WTC11 (cell line): ENCODE measurements at regions of chr17 and their contacts with region 1.

Region 1: GRCh38 chr17:39244600-39245570 is 19.1 kb upstream of the STAC2 start:
- DNase-seq: peak; percentile 98
- ATAC-seq: peak; percentile 92
- H3K4me3 Mint-ChIP-seq: no peak overlapping the region
- H3K27ac Mint-ChIP-seq: no peak overlapping the region
- H3K4me1 Mint-ChIP-seq: peaks cover 22% of the 10 kb centered on the region
- H3K27me3 Mint-ChIP-seq: no peaks in the 10 kb centered on the region; the same call in 1 of the 2 replicates
- CTCF ChIP-seq: peak; percentile 94

Region 2: DNA sequence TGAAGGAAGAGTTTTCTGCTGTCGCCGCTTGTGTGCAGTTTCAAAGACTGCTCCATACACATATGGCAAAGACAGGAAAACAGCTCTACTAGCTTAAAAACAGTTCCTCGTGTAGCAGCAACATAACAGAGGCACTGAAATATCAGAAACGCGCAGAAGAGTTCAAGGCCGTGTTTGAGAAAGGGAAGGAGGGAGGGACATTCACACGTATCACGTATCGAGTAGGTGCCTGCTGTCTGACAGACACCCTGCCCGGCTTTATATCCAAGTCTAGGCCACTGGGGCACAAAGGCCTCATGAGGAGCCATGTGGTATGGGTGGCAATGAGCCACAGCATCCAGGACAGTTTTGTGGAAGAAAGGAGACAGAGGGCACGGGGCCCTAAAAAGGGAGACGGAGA is 143.8 kb before region 1 on chr17:
- CTCF ChIA-PET with region 1: no interaction called
- POLR2A ChIA-PET with region 1: no interaction called
- DNase-seq: no peak
- ATAC-seq: no peak
- H3K4me3 Mint-ChIP-seq: no peak overlapping the region
- H3K27ac Mint-ChIP-seq: no peak overlapping the region
- H3K4me1 Mint-ChIP-seq: peaks cover 9% of the 10 kb centered on the region
- H3K27me3 Mint-ChIP-seq: no peaks in the 10 kb centered on the region; the same call in none of the 2 replicates
- CTCF ChIP-seq: no peak

Region 3: DNA sequence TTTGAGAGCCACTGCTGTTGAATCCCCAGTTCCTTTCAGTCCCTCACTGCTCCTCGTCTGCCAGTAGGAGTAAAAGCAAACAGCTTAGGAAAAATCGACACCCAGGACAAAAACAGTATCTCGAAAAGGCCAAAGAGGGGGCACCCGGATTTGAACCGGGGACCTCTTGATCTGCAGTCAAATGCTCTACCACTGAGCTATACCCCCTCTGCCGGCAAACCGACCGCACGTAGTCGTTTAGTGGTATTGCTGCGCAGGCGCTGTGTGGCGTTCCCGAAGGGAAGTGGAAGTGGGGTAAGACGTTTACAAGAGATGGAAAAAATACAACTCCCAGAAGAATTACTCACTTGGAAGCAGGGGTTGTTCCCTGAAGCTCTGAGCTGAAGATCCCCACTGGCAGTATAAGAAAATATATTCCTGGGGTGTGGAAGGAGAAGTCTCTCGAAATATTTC is 91.3 kb before region 1 on chr17:
- CTCF ChIA-PET with region 1: interaction called, 17 read pairs
- POLR2A ChIA-PET with region 1: no interaction called
- DNase-seq: peak; percentile 92
- ATAC-seq: peak; percentile 22
- H3K4me3 Mint-ChIP-seq: peak overlapping the region; percentile 100
- H3K27ac Mint-ChIP-seq: peak overlapping the region; percentile 13
- H3K4me1 Mint-ChIP-seq: peaks cover 21% of the 10 kb centered on the region
- H3K27me3 Mint-ChIP-seq: peaks cover 43% of the 10 kb centered on the region
- CTCF ChIP-seq: no peak

Region 4: GRCh38 chr17:39199820-39200069 is 45.1 kb before region 1 on chr17:
- CTCF ChIA-PET with region 1: interaction called, 626 read pairs
- POLR2A ChIA-PET with region 1: interaction called, 5 read pairs
- DNase-seq: peak; percentile 83
- ATAC-seq: peak; percentile 25
- H3K4me3 Mint-ChIP-seq: peak overlapping the region; percentile 98
- H3K27ac Mint-ChIP-seq: peak overlapping the region; percentile 100
- H3K4me1 Mint-ChIP-seq: peaks cover 48% of the 10 kb centered on the region
- H3K27me3 Mint-ChIP-seq: no peaks in the 10 kb centered on the region; the same call in 1 of the 2 replicates
- CTCF ChIP-seq: no peak

Region 5: DNA sequence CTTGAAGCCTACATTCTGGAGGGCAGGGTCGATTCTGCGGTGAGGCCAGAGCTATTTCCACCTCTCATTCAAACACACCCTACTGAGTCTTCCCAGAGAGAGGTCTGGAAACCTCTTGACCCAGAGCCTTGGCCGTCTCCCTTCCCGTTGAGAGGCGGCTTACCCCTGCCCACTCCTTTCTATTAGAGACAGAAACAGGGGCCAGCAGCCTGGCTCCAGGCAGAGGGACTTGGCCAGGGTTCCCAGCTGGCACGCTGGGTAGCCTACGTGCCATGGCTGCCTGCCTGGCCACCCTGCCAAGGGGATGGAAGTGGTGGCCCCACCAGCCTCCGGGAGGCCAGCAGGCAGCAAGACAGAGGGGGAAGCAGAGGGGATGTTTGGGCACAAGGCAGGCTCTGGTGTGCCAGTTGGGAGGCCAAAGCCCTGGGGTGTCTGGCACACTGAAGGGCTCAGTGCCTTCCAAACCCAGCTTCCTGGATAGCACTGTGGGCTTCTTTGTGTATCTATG is 25.2 kb before region 1 on chr17:
- CTCF ChIA-PET with region 1: interaction called, 626 read pairs
- POLR2A ChIA-PET with region 1: no interaction called
- DNase-seq: no peak
- ATAC-seq: no peak
- H3K4me3 Mint-ChIP-seq: no peak overlapping the region
- H3K27ac Mint-ChIP-seq: no peak overlapping the region
- H3K4me1 Mint-ChIP-seq: peaks cover 16% of the 10 kb centered on the region
- H3K27me3 Mint-ChIP-seq: peaks cover 67% of the 10 kb centered on the region
- CTCF ChIP-seq: no peak

Region 6: GRCh38 chr17:39261286-39261685 is 16.4 kb after region 1 on chr17:
- CTCF ChIA-PET with region 1: interaction called, 17 read pairs
- POLR2A ChIA-PET with region 1: no interaction called
- DNase-seq: peak; percentile 79
- ATAC-seq: peak; percentile 88
- H3K4me3 Mint-ChIP-seq: no peak overlapping the region
- H3K27ac Mint-ChIP-seq: peak overlapping the region; percentile 89
- H3K4me1 Mint-ChIP-seq: peaks cover 5% of the 10 kb centered on the region
- H3K27me3 Mint-ChIP-seq: no peaks in the 10 kb centered on the region
- CTCF ChIP-seq: peak; percentile 54

Region 7: GRCh38 chr17:39401412-39402243 is 156.7 kb after region 1 on chr17 and contains the start of gene FBXL20:
- CTCF ChIA-PET with region 1: interaction called, 12 read pairs
- POLR2A ChIA-PET with region 1: no interaction called
- DNase-seq: peak; percentile 92
- ATAC-seq: peak; percentile 70
- H3K4me3 Mint-ChIP-seq: peak within 1 kb of the TSS; percentile 96
- H3K27ac Mint-ChIP-seq: peak within 1 kb of the TSS; percentile 92
- H3K4me1 Mint-ChIP-seq: peaks cover 7% of the 10 kb centered on the region
- H3K27me3 Mint-ChIP-seq: peaks cover 4% of the 10 kb centered on the region
- CTCF ChIP-seq: no peak
- total RNA-seq, gene FBXL20: 9.7 to 13.8 TPM (median 13.0 TPM) in 3 replicates